Activated CD8-positive, alpha-beta T cell treated with anti-CD3 and anti-CD28 coated beads, Interleukin-2, amount 10 ng/mL, durations not matched to agents 7 days and 5 days (primary cell): ENCODE measurements at regions of chr7 and their contacts with region 1.

Region 1: DNA sequence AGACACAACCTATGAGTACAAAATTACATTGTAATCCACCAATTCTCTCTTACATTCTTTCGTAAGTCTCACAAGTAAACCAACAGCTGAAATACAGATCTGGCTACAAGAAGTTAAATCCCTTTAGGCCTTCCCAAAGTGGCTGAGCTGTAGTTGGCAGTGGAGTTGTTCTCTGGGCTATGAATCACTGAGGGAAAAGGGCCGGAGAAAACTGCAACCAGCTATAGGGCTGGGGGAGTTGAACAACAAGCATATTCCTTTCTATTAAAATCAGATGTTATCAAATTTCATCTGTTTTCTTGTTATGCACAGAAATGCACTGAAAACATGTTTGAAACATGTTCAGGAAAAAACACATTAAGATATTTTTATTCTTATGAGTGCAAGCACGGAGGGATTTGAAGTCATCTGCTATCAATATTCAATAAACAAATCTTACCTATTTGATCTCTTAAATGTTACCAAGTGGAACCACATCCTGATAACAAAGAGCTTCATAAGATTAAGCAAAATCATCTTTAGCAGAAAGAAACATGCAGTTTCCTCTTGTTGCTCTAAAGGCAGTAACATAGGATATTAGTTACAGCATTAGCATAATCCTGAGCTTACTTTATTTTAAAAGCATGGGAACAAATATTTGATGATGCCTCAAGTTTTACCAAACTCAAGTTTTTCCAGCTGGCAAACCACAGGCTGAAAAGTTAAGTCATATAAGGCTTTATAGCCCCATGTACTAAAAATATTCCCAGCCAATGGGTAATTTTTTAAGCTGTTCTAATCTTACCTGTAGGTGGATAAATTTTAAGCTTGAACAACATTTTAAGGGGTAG is 212.7 kb downstream of the TAX1BP1 start:
- DNase-seq: no peak
- ATAC-seq: no peak
- H3K4me3 Mint-ChIP-seq: no peak overlapping the region
- H3K27ac Mint-ChIP-seq: no peak overlapping the region
- H3K4me1 Mint-ChIP-seq: peaks cover 14% of the 10 kb centered on the region
- H3K27me3 Mint-ChIP-seq: no peaks in the 10 kb centered on the region

Region 2: DNA sequence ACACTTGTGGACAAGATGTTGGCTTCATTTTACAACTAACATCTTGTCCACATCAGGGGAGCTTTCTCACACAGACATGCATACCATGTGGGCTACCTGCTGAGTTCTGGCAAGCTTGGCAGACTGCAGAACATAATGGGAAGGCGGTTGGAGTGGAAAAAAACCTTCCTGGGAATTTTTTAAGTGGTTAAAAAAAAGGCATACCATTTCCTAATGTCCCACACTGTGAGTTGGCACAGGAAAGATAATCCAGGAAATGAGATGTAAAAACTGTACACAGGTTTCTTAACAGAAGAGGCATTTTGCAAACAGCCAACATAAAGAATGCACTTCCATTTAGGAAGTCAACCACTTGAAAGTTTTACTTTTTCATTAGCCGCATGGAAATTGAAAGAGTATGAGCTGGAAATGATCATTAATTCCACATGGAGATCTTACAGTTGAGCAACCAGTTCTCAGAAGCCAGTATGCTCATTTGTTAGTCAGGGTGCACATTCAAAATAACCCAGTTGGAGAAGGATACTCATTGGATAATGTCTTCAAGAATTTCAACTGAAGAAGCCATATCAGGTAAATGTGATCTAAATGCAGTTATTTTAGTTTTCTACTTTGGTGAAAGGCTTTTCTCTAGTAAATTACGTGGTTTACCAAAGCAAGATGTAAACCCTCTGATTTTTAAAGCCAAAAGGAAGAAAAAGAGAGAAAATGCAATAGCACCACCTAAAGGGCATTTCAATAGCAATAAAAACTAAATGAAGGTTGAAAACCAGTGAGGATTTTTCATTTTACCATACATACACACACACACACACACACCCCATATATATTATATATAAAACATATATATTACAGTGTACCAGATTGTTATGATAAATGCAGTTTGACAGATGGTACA is 18.8 kb before region 1 on chr7:
- CTCF ChIA-PET with region 1: interaction called, 11 read pairs
- POLR2A ChIA-PET with region 1: no interaction called
- DNase-seq: no peak
- ATAC-seq: no peak
- H3K4me3 Mint-ChIP-seq: no peak overlapping the region
- H3K27ac Mint-ChIP-seq: no peak overlapping the region
- H3K4me1 Mint-ChIP-seq: peaks cover 2% of the 10 kb centered on the region
- H3K27me3 Mint-ChIP-seq: no peaks in the 10 kb centered on the region